Vagina (tissue), 2 donors: ENCODE measurements at regions of chr6 and their contacts with region 1.

Region 1: DNA sequence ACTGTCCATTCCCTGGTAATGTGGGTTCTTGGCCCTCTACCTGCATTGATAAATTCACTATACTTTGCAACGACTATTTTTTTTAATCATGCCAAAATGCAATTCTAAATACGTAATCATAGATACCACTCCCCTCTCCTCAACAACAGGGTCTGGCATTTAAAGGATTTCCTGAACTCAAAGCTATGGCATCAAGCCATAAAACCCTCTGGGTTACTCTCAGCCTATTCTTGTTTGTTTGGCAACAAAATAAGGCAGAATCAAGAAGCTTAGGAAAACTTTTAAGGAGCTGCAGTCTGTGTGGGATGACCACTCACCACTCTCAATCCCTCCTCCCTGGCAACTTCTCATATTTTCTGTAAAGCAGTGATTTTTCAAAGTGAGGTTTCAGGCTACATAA is 669.9 kb upstream of the ID4 start:
- DNase-seq: no peak
- H3K4me3 ChIP-seq: no peak overlapping the region
- H3K27ac ChIP-seq: no peak overlapping the region
- H3K4me1 ChIP-seq: peaks cover 10% of the 10 kb centered on the region
- H3K27me3 ChIP-seq: no peaks in the 10 kb centered on the region
- CTCF ChIP-seq: no peak
- POLR2A ChIP-seq: no peak

Region 2: GRCh38 chr6:19002976-19003560 is 164.2 kb before region 1 on chr6:
- intact Hi-C with region 1: no loop called
- DNase-seq: no peak
- H3K4me3 ChIP-seq: no peak overlapping the region
- H3K27ac ChIP-seq: no peak overlapping the region
- H3K4me1 ChIP-seq: no peaks in the 10 kb centered on the region
- H3K27me3 ChIP-seq: no peaks in the 10 kb centered on the region
- CTCF ChIP-seq: no peak
- POLR2A ChIP-seq: no peak

Region 3: GRCh38 chr6:19035461-19036195 is 131.6 kb before region 1 on chr6:
- intact Hi-C with region 1: loop called (anchors 10 kb)
- DNase-seq: no peak
- H3K4me3 ChIP-seq: no peak overlapping the region
- H3K27ac ChIP-seq: peak overlapping the region; percentile 36
- H3K4me1 ChIP-seq: peaks cover 33% of the 10 kb centered on the region
- H3K27me3 ChIP-seq: no peaks in the 10 kb centered on the region
- CTCF ChIP-seq: no peak
- POLR2A ChIP-seq: no peak